Naive thymus-derived CD4-positive, alpha-beta T cell (primary cell): ENCODE measurements at regions of chr7 and their contacts with region 1.

Region 1: DNA sequence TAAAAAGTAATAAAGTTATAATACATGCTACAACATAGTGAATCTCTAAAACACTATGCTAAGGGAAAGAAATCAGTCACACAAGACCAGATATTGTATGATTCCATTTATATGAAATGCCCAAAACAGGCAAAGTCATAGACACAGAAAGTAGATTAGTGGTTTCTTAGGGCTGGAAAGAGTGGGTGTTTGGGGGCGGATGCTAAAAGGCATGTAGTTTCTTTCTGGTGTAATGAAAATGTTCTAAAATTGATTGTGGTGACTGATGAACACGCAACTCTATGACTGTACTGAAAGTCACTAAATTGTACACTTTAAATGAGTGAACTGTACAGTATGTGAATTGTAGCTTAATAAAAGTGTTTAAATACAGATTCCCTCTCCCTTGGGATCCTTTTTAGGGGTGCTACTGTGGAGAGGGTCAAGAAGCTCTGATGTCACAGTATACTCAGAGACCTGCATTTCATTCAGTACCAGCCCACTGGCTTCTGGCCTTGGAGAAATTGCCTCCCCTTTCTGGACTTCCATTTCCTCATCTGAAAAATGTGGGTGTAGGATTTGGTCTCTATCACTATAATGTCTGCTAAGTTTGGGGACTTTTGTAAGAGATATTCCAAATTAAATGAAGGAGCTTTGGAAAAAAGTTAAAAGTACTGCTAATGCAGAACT is 46.4 kb downstream of the AOAH start:
- DNase-seq: peak in 5 of 9 donors; percentile 5 to 68 (median 25)
- ATAC-seq: peak; percentile 19
- H3K4me3 ChIP-seq: peak overlapping the region; percentile 5
- H3K4me3 Mint-ChIP-seq: peak overlapping the region; percentile 46 to 84 (median 67)
- H3K27ac ChIP-seq: peak overlapping the region; percentile 55
- H3K27ac Mint-ChIP-seq: peak overlapping the region; percentile 83 to 98 (median 89)
- H3K4me1 ChIP-seq: peaks cover 14 to 29% of the 10 kb centered on the region in 2 donors
- H3K4me1 Mint-ChIP-seq: peaks cover 12 to 72% (median 57%) of the 10 kb centered on the region in 7 donors
- H3K27me3 ChIP-seq: no peaks in the 10 kb centered on the region
- H3K27me3 Mint-ChIP-seq: no peaks in the 10 kb centered on the region

Region 2: DNA sequence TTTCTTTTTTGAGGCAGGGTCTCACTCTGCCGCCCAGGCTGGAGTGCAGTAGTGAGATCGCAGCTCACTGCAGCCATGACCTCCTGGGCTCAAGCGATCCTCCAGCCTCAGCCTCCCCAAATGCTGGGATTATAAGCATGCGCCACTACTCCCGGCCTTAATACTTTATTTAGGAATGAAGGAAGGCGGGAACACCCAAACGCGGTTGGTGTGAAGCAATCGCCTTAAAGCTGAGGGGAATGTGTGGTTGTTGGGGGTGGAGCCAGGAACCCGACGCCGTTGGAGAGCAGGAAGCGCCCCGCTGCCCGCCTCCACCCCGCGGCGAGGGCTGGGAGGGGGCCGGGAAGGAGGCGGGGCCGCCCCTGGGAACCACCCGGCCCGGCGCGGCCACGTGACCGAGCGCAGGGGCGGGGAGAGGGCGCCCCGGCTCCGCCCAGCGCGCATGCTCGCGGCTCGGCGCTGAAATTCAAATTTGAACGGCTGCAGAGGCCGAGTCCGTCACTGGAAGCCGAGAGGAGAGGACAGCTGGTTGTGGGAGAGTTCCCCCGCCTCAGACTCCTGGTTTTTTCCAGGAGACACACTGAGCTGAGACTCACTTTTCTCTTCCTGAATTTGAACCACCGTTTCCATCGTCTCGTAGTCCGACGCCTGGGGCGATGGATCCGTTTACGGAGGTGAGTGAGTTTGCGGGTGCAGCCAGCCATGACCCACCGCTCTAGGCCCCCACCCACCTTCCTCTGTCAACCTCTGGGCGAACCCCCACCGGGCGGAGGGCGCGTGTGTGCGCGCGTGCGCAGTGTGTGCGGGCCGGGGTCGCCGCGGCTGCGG is 288.3 kb before region 1 on chr7 and contains the start of gene ANLN:
- CTCF ChIA-PET with region 1: no interaction called
- POLR2A ChIA-PET with region 1: no interaction called
- intact Hi-C with region 1: loop called in 1 of 2 experiments (anchors 5 kb)
- DNase-seq: peak; percentile 71 to 91 (median 82)
- ATAC-seq: peak; percentile 98
- H3K4me3 ChIP-seq: peak within 1 kb of the TSS; percentile 78
- H3K4me3 Mint-ChIP-seq: peak within 1 kb of the TSS; percentile 77 to 90 (median 85)
- H3K27ac ChIP-seq: peak within 1 kb of the TSS; percentile 67
- H3K27ac Mint-ChIP-seq: peak within 1 kb of the TSS; percentile 72 to 90 (median 81)
- H3K4me1 ChIP-seq: peaks cover 8 to 19% of the 10 kb centered on the region in 2 donors
- H3K4me1 Mint-ChIP-seq: peaks cover 12 to 39% (median 26%) of the 10 kb centered on the region in 7 donors
- H3K27me3 ChIP-seq: no peaks in the 10 kb centered on the region
- H3K27me3 Mint-ChIP-seq: peaks cover 0 to 12% (median 0%) of the 10 kb centered on the region in 5 donors
- total RNA-seq, gene ANLN: 0.35 to 48.6 (median 0.82) TPM

Region 3: DNA sequence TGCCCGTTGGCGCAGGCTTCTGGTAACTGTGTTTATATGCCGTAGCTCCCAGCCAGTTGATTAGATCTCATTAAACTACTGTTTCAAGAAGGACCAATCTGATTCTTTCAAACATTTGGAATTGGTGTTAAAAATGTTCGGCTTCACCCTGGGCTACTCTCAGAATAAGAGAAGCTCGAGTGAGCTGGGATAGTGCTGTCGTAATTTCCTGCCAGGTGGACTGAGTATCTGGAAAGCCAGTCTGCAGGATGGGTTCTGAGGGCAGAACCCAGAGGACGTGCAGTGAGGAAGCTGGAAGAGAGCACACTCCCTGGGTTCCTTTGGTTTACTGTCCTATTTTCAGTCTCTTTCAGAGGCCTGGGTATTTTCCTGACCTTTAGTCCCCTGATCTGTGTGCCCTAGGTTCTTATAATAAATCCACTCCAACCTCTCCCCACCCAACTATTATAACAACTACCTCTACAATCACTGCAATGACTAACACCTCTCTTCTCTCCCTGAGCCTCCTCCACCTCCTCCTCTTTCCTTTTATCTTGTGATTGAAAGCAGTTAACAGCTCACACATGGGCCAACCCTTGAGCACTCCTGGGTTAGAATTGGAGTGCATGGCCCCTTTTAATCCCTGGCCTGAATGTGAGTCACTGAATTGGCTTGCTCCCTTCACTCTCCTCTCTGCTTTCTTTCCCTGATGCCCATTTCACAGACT is 16.6 kb before region 1 on chr7:
- CTCF ChIA-PET with region 1: no interaction called
- POLR2A ChIA-PET with region 1: no interaction called
- intact Hi-C with region 1: no loop called
- DNase-seq: no peak
- ATAC-seq: no peak
- H3K4me3 ChIP-seq: no peak overlapping the region
- H3K4me3 Mint-ChIP-seq: no peak overlapping the region
- H3K27ac ChIP-seq: no peak overlapping the region
- H3K27ac Mint-ChIP-seq: peak overlapping the region in 3 of 9 donors; percentile 45 to 82 (median 55)
- H3K4me1 ChIP-seq: peaks cover 0 to 11% of the 10 kb centered on the region in 2 donors
- H3K4me1 Mint-ChIP-seq: peaks cover 0 to 40% (median 14%) of the 10 kb centered on the region in 7 donors
- H3K27me3 ChIP-seq: no peaks in the 10 kb centered on the region
- H3K27me3 Mint-ChIP-seq: no peaks in the 10 kb centered on the region

Region 4: GRCh38 chr7:36692456-36692855 is 14.6 kb after region 1 on chr7:
- CTCF ChIA-PET with region 1: interaction called, 3 read pairs
- POLR2A ChIA-PET with region 1: interaction called, 4 read pairs
- intact Hi-C with region 1: loop called in 1 of 2 experiments (anchors 1 kb)
- DNase-seq: no peak
- ATAC-seq: no peak
- H3K4me3 ChIP-seq: no peak overlapping the region
- H3K4me3 Mint-ChIP-seq: peak overlapping the region in 7 of 10 donors; percentile 12 to 83 (median 43)
- H3K27ac ChIP-seq: no peak overlapping the region
- H3K27ac Mint-ChIP-seq: peak overlapping the region in 8 of 9 donors; percentile 3 to 94 (median 26)
- H3K4me1 ChIP-seq: peaks cover 0 to 33% of the 10 kb centered on the region in 2 donors
- H3K4me1 Mint-ChIP-seq: peaks cover 9 to 49% (median 40%) of the 10 kb centered on the region in 7 donors
- H3K27me3 ChIP-seq: no peaks in the 10 kb centered on the region
- H3K27me3 Mint-ChIP-seq: no peaks in the 10 kb centered on the region

Region 5: DNA sequence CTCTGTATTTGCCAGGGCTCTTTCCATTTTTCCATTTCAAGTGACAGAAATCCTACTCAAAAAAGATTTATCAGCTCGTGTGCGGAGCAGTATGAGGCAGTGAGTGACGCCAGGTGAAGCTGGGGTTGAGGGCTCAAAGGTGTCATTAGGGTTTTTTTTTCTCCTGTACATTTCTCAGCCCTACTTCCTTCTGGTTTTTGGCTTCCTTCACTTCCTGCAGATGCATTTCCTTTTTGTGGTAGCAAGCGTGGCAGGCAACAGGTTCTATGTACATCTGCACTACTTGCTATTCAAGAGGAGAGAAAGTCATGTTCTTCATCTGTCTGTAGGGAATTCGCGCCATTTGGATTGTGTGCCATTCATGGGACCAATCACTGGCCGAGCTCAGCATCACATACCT is 99.2 kb after region 1 on chr7:
- CTCF ChIA-PET with region 1: interaction called, 6 read pairs
- POLR2A ChIA-PET with region 1: interaction called, 3 read pairs
- intact Hi-C with region 1: loop called in 1 of 2 experiments (anchors 5 kb)
- DNase-seq: peak; percentile 11 to 90 (median 85)
- ATAC-seq: peak; percentile 78
- H3K4me3 ChIP-seq: peak overlapping the region; percentile 41
- H3K4me3 Mint-ChIP-seq: peak overlapping the region; percentile 76 to 92 (median 84)
- H3K27ac ChIP-seq: peak overlapping the region; percentile 75
- H3K27ac Mint-ChIP-seq: peak overlapping the region; percentile 78 to 99 (median 95)
- H3K4me1 ChIP-seq: peaks cover 68 to 69% of the 10 kb centered on the region in 2 donors
- H3K4me1 Mint-ChIP-seq: peaks cover 65 to 90% (median 85%) of the 10 kb centered on the region in 7 donors
- H3K27me3 ChIP-seq: no peaks in the 10 kb centered on the region
- H3K27me3 Mint-ChIP-seq: no peaks in the 10 kb centered on the region

Region 6: DNA sequence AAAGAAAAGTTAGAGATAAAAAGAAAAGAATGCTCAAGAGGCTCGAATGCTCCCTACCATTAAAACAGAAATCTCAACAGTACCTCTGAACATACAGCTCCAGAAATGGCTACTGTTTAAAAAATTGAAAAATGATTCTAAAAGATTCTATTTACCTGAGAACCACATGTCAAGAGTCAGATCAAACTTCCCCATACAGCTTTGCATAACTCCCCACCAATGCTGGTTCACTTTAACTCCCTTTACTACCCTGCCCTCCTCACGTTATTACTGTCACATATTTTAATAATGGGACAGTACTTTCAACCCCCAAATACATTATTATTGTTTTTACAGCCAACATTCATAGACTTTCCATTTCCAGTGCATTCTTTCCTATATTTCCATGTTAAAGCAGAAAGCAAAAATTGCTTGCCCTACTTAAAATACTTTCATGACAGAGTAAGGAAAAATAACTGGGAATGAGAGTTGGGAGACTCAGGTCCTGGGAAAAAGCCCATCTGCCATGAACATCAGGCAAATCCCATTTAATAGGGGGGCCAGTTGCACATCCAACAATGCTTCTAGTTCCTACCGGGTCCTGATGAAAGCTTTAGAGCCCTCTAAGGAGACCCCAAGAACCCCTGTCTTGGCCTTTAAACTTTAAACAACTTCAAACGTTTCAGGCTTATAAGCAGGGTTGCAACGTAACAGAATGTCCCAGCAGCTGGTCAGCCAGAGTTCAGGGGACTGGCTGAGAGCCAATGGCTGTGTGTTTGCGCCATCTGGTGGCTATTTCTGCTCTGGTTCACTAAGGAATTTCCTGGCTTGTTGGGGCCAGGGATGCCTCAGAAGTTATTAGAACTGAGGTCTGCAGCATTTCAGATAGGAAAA is 523.3 kb after region 1 on chr7:
- CTCF ChIA-PET with region 1: interaction called, 5 read pairs
- POLR2A ChIA-PET with region 1: no interaction called
- intact Hi-C with region 1: loop called in 1 of 2 experiments (anchors 1 kb)
- DNase-seq: peak in 5 of 9 donors; percentile 10 to 44 (median 18)
- ATAC-seq: peak; percentile 64
- H3K4me3 ChIP-seq: no peak overlapping the region
- H3K4me3 Mint-ChIP-seq: no peak overlapping the region
- H3K27ac ChIP-seq: no peak overlapping the region
- H3K27ac Mint-ChIP-seq: peak overlapping the region in 5 of 9 donors; percentile 18 to 74 (median 28)
- H3K4me1 ChIP-seq: no peaks in the 10 kb centered on the region
- H3K4me1 Mint-ChIP-seq: peaks cover 0 to 19% (median 11%) of the 10 kb centered on the region in 7 donors
- H3K27me3 ChIP-seq: no peaks in the 10 kb centered on the region
- H3K27me3 Mint-ChIP-seq: no peaks in the 10 kb centered on the region